ENCODE measurements at regions of chrX and their contacts with region 1.

Region 1: DNA sequence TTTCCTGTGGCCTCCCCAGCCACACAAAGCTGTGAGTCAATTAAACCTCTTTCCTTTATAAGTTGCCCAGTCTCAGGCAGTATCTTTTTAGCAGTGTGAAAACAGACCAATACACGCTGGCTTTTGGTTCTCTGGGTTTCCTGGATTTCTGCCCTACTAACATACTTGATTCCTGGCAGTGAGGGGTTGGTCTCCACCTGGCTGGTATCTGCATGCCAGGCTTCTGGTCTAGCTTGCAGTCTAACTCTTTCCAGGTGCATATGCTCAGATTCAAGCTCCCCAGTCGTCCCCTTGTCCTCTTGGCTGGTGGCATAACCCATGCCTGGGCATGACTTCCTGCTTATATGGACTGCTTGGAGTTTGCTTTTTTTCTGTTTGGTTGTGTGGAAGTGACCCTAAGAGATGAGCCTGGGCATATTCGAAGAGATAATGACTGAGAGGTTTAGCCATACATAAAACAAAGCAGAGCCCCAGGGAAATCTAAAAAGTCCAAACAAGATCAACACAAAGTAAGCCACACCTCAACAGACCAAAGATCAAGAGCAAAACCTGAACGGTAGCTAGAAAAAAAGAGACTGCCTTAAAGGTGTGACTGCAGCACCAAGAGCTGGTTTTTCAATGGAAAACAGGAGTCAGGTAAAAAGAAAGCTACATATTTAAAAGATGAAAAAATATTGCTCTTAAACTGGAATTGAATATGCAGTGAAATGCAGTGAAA is 102.1 kb upstream of the STS start:
- DNase-seq: no peak
- H3K4me3 ChIP-seq: no peak overlapping the region
- H3K27ac ChIP-seq: no peak overlapping the region
- H3K4me1 ChIP-seq: no peaks in the 10 kb centered on the region
- H3K27me3 ChIP-seq: no peaks in the 10 kb centered on the region
- CTCF ChIP-seq: no peak

Region 2: GRCh38 chrX:5632061-5632614 is 1413.3 kb before region 1 on chrX:
- CTCF ChIA-PET with region 1: no interaction called
- POLR2A ChIA-PET with region 1: no interaction called
- intact Hi-C with region 1: no loop called
- DNase-seq: no peak
- H3K4me3 ChIP-seq: no peak overlapping the region
- H3K27ac ChIP-seq: no peak overlapping the region
- H3K4me1 ChIP-seq: no peaks in the 10 kb centered on the region
- H3K27me3 ChIP-seq: no peaks in the 10 kb centered on the region
- CTCF ChIP-seq: no peak

Region 3: GRCh38 chrX:7146703-7147420 is 101.5 kb after region 1 on chrX:
- CTCF ChIA-PET with region 1: no interaction called
- POLR2A ChIA-PET with region 1: interaction called, 17 read pairs
- intact Hi-C with region 1: no loop called
- DNase-seq: no peak
- H3K4me3 ChIP-seq: peak overlapping the region; percentile 61
- H3K27ac ChIP-seq: no peak overlapping the region
- H3K4me1 ChIP-seq: no peaks in the 10 kb centered on the region
- H3K27me3 ChIP-seq: no peaks in the 10 kb centered on the region
- CTCF ChIP-seq: no peak

Measured in A673 (cell line).